Sciatic nerve (tissue), 2 donors: ENCODE measurements at regions of chr10 and their contacts with region 1.

Region 1: GRCh38 chr10:100338434-100339036 is 8.5 kb upstream of the SCD start:
- DNase-seq: peak; percentile 88
- ATAC-seq: peak; percentile 67

Region 2: GRCh38 chr10:99714446-99714845 is 624.1 kb before region 1 on chr10:
- intact Hi-C with region 1: no loop called
- DNase-seq: no peak
- ATAC-seq: no peak

Region 3: DNA sequence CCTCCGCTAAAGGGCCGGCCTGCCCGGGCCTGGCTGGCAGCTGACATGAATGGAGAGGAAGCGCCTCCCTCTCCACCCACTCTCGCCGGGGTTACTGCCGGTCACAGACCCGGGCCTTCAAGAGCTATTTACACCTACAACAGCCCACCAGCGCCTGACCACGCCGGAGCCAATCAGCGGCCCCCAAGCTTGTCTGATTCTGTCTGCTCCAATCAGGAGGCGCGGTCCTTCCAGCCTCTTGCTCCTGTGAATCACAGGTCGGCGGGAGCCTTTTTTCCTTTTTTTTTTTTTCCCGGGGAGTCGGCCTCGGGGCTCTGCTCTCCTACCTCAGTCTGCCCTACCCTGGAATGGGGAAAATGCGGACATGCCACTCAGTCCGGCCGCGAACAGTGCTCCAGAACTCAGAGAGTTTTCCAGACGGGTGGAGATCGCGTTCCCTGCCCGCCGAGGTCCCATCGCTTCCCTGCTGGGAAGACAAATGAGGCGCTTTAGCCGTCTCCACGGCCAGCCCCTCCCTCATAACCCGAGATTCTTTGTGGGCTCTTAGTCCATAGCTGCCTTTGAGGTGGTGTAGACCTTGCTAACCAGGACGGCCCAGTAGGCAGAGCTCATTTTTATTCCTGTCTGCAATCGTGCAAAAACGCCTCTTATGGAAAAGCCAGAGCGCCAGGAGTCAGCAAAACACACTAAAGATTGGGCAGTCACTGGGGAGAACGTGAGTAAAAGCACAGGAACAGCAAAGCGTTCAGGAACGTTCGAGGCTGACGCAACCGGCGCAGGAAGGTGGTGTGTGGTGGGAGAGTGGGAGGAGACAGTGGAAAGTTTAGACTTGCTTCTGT is 35.0 kb after region 1 on chr10:
- intact Hi-C with region 1: no loop called
- DNase-seq: peak; percentile 97
- ATAC-seq: peak; percentile 97

Region 4: GRCh38 chr10:100433253-100434240 is 95.0 kb after region 1 on chr10:
- intact Hi-C with region 1: loop called (anchors 5 kb)
- DNase-seq: peak; percentile 97
- ATAC-seq: peak; percentile 95

Region 5: GRCh38 chr10:100529475-100530298 is 191.2 kb after region 1 on chr10 and contains the start of gene NDUFB8:
- intact Hi-C with region 1: loop called (anchors 10 kb)
- DNase-seq: peak; percentile 93
- ATAC-seq: peak; percentile 97
- total RNA-seq, gene NDUFB8: 123 TPM

Region 6: GRCh38 chr10:100969187-100970075 is 630.9 kb after region 1 on chr10 and contains the start of gene SEMA4G:
- intact Hi-C with region 1: no loop called
- DNase-seq: peak; percentile 74
- ATAC-seq: peak; percentile 79
- total RNA-seq, gene SEMA4G: 15.3 TPM